Left cardiac atrium (tissue), 4 donors: ENCODE measurements at regions of chr11 and their contacts with region 1.

Region 1: GRCh38 chr11:122202951-122203456 is 87.0 kb upstream of the BLID start:
- DNase-seq: peak; percentile 68
- ATAC-seq: peak; percentile 88

Region 2: DNA sequence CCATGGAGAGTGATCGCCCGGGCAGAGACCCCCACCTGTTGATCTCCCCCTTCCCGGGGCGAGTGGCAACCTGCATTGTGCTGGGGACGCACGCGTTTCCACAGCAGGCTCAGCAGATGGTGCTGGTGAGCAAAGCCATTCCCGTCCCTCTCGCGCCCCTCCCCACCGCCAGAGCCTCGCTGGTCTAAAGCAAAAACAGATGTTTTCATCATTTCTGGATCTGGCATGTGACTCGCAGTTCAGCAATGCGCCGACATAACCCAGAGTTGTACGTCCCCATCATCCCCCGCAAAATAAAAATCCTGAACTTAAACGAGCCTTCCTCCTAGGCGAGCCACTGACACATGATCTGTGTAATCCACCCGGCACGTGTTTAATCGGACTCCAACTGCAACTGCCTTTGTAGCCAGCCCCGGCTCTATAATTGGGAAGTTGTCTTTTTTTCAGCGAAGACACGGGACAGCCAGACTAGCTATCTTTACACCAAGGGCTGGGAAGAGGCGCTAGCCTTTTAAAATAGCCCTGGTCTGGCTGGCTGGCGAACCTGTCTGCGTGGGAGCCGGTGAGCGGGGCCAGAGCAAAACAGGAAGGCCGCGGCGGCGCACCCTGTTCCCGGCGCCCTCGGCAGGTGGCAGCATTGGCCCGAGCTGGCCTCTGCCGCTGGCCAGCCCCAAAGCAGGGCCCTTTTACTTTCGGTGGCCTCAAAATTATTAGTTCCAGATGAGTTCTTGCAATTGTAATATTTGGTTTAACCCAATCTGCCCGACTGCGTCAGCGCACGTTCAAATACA is 547.3 kb before region 1 on chr11:
- intact Hi-C with region 1: loop called (anchors 2 to 5 kb)
- DNase-seq: peak; percentile 88
- ATAC-seq: peak; percentile 95 to 96

Region 3: DNA sequence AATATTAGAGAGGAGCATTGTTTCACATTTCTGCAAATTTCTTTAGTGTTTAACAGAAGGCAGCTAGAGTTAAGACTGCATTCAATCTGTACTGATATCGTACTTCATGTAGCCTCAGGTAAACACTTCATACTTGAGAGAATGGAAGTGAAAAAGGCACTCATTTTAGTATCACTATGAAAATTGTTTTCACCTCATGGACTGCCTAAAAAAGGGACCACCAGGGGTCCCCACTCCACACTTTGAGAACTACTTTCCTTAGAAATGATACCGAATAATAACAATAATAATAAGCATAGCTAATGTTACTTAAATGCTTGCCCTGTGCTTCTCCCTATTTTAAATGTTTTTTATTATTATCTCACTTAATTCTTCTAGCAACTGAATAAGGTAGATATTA is 182.1 kb before region 1 on chr11:
- intact Hi-C with region 1: loop called (anchors 5 to 10 kb)
- DNase-seq: no peak
- ATAC-seq: no peak

Region 4: GRCh38 chr11:122108192-122108799 is 94.7 kb before region 1 on chr11:
- intact Hi-C with region 1: loop called (anchors 5 to 10 kb)
- DNase-seq: no peak
- ATAC-seq: peak in 1 of 2 donors; percentile 60

Region 5: GRCh38 chr11:122126024-122126688 is 76.8 kb before region 1 on chr11:
- intact Hi-C with region 1: no loop called
- DNase-seq: no peak
- ATAC-seq: no peak

Region 6: DNA sequence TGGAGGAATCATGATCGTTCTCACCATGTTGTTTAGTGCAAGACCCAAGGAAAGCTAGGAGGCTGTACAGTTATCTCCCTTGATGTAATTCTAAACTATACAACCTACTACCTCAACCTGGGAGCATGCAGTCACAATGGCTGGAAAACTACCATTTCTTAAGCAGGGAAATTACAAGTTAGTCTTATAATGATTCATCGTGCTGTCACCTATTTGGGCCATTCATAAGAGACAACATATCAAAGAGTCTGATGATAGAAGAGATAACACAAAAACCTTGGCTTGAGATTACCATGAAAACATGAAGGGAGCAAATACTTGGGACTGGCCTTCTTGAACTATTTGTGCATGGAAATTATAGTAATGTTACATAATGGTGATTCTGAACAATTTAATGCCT is 56.5 kb before region 1 on chr11:
- intact Hi-C with region 1: no loop called
- DNase-seq: no peak
- ATAC-seq: no peak